ENCODE measurements at regions of chr6 and their contacts with region 1.

Region 1: DNA sequence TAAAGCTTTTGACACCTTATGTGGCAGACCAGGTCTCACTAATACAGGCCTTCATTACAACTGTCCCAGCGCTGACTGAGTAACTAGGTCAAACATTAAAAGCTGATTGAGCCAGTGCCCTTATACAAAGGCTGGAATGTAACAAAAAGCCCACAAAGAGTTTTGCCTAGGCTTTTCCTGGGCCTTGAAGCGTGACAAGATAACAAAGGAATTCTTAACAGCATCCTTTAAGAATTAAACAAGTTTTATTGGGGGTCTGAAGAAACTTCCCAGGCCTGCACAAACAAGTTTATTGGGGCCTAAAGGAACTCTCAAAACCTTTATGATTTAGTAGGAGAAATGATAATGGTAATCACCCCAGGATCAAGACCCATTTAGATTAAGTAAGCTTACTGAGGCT is 267.6 kb upstream of the FAM83B start:
- DNase-seq: peak; percentile 67 to 68
- H3K4me3 ChIP-seq: no peak overlapping the region
- H3K4me3 Mint-ChIP-seq: no peak overlapping the region
- H3K27ac Mint-ChIP-seq: peak overlapping the region; percentile 31
- H3K4me1 ChIP-seq: peaks cover 33% of the 10 kb centered on the region
- H3K4me1 Mint-ChIP-seq: peaks cover 24% of the 10 kb centered on the region
- H3K27me3 ChIP-seq: no peaks in the 10 kb centered on the region
- H3K27me3 Mint-ChIP-seq: no peaks in the 10 kb centered on the region
- CTCF ChIP-seq: no peak

Region 2: GRCh38 chr6:54493138-54493537 is 85.9 kb before region 1 on chr6:
- CTCF ChIA-PET with region 1: no interaction called
- POLR2A ChIA-PET with region 1: no interaction called
- intact Hi-C with region 1: loop called (anchors 2 kb)
- DNase-seq: no peak
- H3K4me3 ChIP-seq: no peak overlapping the region
- H3K4me3 Mint-ChIP-seq: no peak overlapping the region
- H3K27ac Mint-ChIP-seq: no peak overlapping the region
- H3K4me1 ChIP-seq: peaks cover 13% of the 10 kb centered on the region
- H3K4me1 Mint-ChIP-seq: peaks cover 12% of the 10 kb centered on the region
- H3K27me3 ChIP-seq: no peaks in the 10 kb centered on the region
- H3K27me3 Mint-ChIP-seq: no peaks in the 10 kb centered on the region
- CTCF ChIP-seq: no peak

Region 3: DNA sequence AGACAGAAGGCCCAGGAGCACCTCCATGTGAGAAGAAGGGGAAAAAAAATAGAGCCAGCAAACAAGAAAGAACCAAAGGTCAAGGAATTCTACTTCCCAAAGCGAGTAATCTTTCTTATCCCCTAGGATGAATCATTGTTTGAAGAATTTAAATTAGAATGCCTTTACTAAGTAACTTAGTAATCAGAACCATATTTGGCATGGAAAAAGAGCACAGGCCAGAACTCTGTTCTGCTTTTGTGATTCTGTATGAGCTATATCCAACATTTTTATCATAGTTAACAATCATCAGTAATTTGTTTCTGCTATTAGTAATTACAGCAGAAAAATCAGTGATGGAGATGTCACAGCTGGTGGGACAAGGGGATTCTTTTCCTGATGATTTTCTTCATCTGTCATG is 38.7 kb after region 1 on chr6:
- CTCF ChIA-PET with region 1: interaction called, 6 read pairs
- POLR2A ChIA-PET with region 1: no interaction called
- intact Hi-C with region 1: loop called (anchors 1 kb)
- DNase-seq: no peak
- H3K4me3 ChIP-seq: no peak overlapping the region
- H3K4me3 Mint-ChIP-seq: peak overlapping the region; percentile 11
- H3K27ac Mint-ChIP-seq: peak overlapping the region; percentile 76
- H3K4me1 ChIP-seq: peaks cover 20% of the 10 kb centered on the region
- H3K4me1 Mint-ChIP-seq: peaks cover 16% of the 10 kb centered on the region
- H3K27me3 ChIP-seq: no peaks in the 10 kb centered on the region
- H3K27me3 Mint-ChIP-seq: no peaks in the 10 kb centered on the region
- CTCF ChIP-seq: no peak

Region 4: DNA sequence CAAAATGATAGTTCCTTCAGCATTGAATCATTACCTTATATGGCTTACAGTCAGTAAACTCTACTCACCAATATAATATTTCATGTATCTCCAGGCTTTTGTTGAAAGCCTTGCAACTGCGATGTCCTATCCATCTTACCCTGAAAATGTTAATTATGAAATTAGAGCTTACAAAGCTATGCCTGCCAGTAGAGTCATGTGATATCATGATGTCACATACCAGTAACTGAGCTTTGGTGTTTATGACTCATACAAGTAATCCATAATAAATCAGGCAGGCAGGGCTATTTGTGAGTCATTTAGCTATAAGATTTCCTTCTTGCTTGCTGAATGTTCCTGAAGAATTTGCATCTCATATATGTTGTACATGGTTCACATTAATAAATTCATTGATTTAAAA is 222.7 kb after region 1 on chr6:
- CTCF ChIA-PET with region 1: no interaction called
- POLR2A ChIA-PET with region 1: no interaction called
- intact Hi-C with region 1: loop called (anchors 10 kb)
- DNase-seq: no peak
- H3K4me3 ChIP-seq: no peak overlapping the region
- H3K4me3 Mint-ChIP-seq: no peak overlapping the region
- H3K27ac Mint-ChIP-seq: no peak overlapping the region
- H3K4me1 ChIP-seq: peaks cover 28% of the 10 kb centered on the region
- H3K4me1 Mint-ChIP-seq: peaks cover 27% of the 10 kb centered on the region
- H3K27me3 ChIP-seq: no peaks in the 10 kb centered on the region
- H3K27me3 Mint-ChIP-seq: no peaks in the 10 kb centered on the region
- CTCF ChIP-seq: no peak

Region 5: GRCh38 chr6:54878674-54879073 is 299.7 kb after region 1 on chr6:
- CTCF ChIA-PET with region 1: no interaction called
- POLR2A ChIA-PET with region 1: no interaction called
- intact Hi-C with region 1: loop called (anchors 5 kb)
- DNase-seq: no peak
- H3K4me3 ChIP-seq: no peak overlapping the region
- H3K4me3 Mint-ChIP-seq: no peak overlapping the region
- H3K27ac Mint-ChIP-seq: no peak overlapping the region
- H3K4me1 ChIP-seq: peaks cover 51% of the 10 kb centered on the region
- H3K4me1 Mint-ChIP-seq: peaks cover 8% of the 10 kb centered on the region
- H3K27me3 ChIP-seq: no peaks in the 10 kb centered on the region
- H3K27me3 Mint-ChIP-seq: no peaks in the 10 kb centered on the region
- CTCF ChIP-seq: peak in 1 of 2 experiments; percentile 23

Region 6: DNA sequence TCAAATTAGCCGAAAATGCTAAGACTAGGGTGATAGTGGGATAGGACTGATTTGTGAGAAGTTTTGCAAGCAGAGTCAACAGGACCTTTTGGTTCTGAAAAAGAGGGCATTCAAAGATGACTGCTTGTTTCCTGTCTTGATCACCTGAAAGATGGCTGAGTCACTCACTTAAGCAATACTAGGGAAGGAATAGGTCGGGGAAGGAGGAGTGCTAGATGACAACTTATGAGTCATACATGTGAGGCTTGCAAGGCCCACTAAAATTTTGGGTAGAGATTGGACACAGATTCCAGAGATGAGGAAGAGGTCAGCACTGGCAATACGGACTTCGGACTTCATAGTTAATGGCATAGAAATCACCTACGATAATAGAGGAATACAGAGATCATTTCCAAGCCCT is 356.7 kb after region 1 on chr6:
- CTCF ChIA-PET with region 1: no interaction called
- POLR2A ChIA-PET with region 1: no interaction called
- intact Hi-C with region 1: loop called (anchors 5 kb)
- DNase-seq: peak in 1 of 2 experiments; percentile 9
- H3K4me3 ChIP-seq: no peak overlapping the region
- H3K4me3 Mint-ChIP-seq: no peak overlapping the region
- H3K27ac Mint-ChIP-seq: no peak overlapping the region
- H3K4me1 ChIP-seq: peaks cover 8% of the 10 kb centered on the region
- H3K4me1 Mint-ChIP-seq: peaks cover 12% of the 10 kb centered on the region
- H3K27me3 ChIP-seq: no peaks in the 10 kb centered on the region
- H3K27me3 Mint-ChIP-seq: no peaks in the 10 kb centered on the region
- CTCF ChIP-seq: no peak

Measured in Caco-2 (cell line).